ENCODE measurements at regions of chr3 and their contacts with region 1.

Region 1: DNA sequence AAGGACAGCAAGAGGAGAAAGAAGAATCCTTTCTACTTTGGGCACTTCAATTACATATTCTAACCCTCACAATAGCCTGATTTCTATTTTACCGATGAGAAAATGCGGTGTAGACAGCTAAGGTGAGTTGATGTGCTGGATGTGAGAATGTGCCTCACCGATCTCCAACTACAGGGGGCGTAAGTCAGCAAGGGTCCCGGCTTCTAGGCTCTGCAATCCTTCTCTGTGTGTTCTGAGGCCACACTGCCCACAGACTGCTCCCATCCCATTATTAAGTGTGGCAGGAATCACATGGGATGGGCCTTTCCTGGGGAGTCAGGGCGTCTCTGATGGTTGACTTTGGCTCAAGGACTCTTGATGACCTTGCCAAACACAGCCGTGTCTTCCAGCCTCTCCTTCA is 23.6 kb upstream of the RPL35A start:
- DNase-seq: no peak
- ATAC-seq: no peak
- H3K4me3 ChIP-seq: no peak overlapping the region
- H3K4me3 Mint-ChIP-seq: no peak overlapping the region
- H3K27ac ChIP-seq: no peak overlapping the region
- H3K27ac Mint-ChIP-seq: no peak overlapping the region
- H3K4me1 ChIP-seq: no peaks in the 10 kb centered on the region
- H3K4me1 Mint-ChIP-seq: no peaks in the 10 kb centered on the region
- H3K27me3 ChIP-seq: no peaks in the 10 kb centered on the region
- H3K27me3 Mint-ChIP-seq: no peaks in the 10 kb centered on the region
- CTCF ChIP-seq: no peak

Region 2: GRCh38 chr3:198043119-198043518 is 116.7 kb after region 1 on chr3:
- CTCF ChIA-PET with region 1: no interaction called
- POLR2A ChIA-PET with region 1: no interaction called
- intact Hi-C with region 1: loop called in 1 of 2 experiments (anchors 10 kb)
- DNase-seq: no peak
- ATAC-seq: no peak
- H3K4me3 ChIP-seq: no peak overlapping the region
- H3K4me3 Mint-ChIP-seq: no peak overlapping the region
- H3K27ac ChIP-seq: no peak overlapping the region
- H3K27ac Mint-ChIP-seq: no peak overlapping the region
- H3K4me1 ChIP-seq: no peaks in the 10 kb centered on the region
- H3K4me1 Mint-ChIP-seq: no peaks in the 10 kb centered on the region
- H3K27me3 ChIP-seq: no peaks in the 10 kb centered on the region
- H3K27me3 Mint-ChIP-seq: no peaks in the 10 kb centered on the region
- CTCF ChIP-seq: no peak

Measured in CD4-positive, alpha-beta T cell (primary cell).